Common myeloid progenitor, CD34-positive (primary cell): ENCODE measurements at regions of chr1 and their contacts with region 1.

Region 1: DNA sequence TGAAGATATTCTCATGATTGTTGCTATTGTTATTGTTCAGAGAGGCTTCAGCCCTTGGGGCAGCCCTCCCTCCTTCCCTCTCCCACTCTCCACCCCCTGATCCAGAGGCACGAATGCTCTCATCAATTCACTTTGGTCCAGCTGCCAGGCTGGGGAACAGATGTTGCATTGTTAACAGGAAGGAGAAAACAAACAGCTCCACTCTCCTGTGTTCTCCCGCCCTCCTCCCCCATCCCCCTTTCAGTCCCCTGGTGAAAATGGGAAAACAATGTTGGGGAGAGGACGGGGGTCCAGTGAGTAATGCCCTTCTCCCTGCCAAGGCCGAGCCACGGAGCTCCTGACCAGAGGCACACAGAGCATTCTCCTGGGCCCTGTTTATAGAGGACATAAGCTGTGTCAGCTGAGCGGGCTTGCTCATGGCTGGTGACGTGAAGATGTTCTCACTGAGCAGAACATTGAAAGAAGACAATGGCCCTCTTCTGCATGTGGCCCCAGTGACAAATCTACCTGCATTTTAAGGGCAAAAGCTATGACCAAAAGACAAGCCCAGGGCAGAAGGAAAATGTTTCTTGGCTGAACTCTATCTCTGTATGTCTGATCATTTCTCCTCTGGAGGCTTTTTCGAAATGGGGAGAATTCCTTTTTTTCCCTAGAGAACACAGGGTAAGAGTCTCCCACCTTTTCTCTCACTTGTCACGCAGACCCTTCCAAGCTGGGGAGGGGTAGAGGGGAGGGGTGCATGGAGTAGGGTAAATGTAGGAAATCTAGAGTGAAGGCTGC is 111.7 kb downstream of the GLUL start:
- DNase-seq: no peak
- H3K4me3 ChIP-seq: no peak overlapping the region
- H3K27ac ChIP-seq: no peak overlapping the region
- H3K4me1 ChIP-seq: peaks cover 0 to 11% (median 0%) of the 10 kb centered on the region in 4 experiments
- H3K27me3 ChIP-seq: no peaks in the 10 kb centered on the region

Region 2: DNA sequence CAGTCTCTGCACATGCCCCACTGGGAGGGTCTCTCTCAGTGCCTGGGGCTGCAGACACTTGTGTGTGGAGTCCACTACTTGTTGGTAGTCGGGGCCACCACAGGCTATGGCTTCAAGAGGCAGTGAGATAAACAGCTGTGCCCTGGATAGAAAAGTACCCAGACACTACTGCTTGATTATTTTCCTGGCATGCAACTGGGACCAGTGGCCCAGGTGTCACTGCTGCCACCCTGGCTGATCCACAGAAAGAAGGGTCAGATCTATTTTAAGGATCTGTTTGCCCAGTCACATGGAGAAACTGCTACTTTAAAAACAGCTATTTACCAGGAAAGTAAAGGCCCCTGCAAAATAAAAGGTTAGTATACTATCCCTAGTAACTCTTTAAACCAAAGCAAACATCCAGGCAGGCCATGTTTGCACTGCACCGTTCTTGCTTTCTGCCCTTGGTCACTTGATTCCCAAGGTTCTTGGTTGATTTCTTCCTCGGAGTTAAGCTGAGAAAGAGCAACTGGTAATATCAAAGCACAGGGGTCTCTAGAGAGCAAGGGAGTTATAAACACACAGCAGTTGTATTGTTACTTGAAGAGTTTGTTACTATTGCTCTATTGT is 11.8 kb after region 1 on chr1:
- CTCF ChIA-PET with region 1: interaction called, 15 read pairs
- POLR2A ChIA-PET with region 1: no interaction called
- DNase-seq: no peak
- H3K4me3 ChIP-seq: no peak overlapping the region
- H3K27ac ChIP-seq: no peak overlapping the region
- H3K4me1 ChIP-seq: no peaks in the 10 kb centered on the region
- H3K27me3 ChIP-seq: no peaks in the 10 kb centered on the region